Heart left ventricle (tissue), 16 donors: ENCODE measurements at regions of chr13 and their contacts with region 1.

Region 1: DNA sequence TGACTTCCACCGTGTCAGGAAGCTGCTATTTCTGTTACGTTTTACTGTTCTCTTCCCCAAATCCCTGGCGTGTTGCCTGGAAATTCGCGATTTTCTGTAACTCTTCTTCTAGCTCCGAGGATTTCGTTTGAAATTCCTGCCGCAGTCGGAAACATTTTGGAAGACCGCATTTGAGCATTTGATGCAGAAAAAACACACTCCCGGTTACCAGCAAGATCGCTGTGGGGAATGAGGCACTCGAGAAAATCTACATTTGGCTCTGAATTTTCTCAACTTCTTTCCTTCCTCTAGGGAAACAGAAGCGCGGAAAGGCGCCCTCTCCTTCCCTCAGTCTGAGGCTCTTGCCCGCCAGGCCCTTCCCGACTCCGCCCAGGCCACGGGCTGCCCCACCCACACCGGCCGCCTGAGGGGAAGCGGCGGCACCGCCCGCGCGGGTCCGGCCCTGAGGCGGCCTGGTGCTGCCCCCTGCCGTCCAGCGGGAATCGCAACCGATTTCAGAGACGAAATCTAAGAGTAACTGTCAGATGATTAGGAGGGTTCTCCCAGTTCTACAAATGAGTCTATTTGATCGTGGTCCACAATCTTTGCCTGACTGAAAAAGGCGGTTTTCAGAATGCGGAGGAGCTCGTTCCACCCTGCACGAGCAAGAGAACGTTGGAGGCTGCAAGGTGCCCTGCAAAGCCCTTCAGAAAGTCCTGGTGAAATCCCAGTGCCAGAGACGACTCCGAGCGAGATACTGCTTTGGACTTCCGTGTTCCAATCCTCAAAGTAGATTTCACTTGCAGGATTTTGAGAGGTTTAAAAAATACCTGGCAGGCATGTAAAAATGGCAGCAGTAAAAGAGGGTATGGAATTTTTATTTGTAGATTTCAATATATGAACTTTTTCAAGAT is 18.4 kb upstream of the TUBGCP3 start:
- DNase-seq: peak; percentile 93 to 97 (median 95)
- ATAC-seq: peak; percentile 99 to 100 (median 100)
- H3K4me3 ChIP-seq: peak overlapping the region; percentile 13 to 63 (median 55)
- H3K27ac ChIP-seq: peak overlapping the region in 10 of 12 donors; percentile 11 to 78 (median 62)
- H3K4me1 ChIP-seq: peaks cover 0 to 12% (median 2%) of the 10 kb centered on the region in 12 donors
- H3K27me3 ChIP-seq: peaks cover 0 to 5% (median 0%) of the 10 kb centered on the region in 9 donors
- CTCF ChIP-seq: peak; percentile 92 to 99 (median 96)
- POLR2A ChIP-seq: peak in 1 of 2 donors; percentile 54

Region 2: GRCh38 chr13:111474136-111475002 is 1132.0 kb before region 1 on chr13:
- intact Hi-C with region 1: loop called in 9 of 10 experiments (anchors 1 to 10 kb)
- DNase-seq: no peak
- ATAC-seq: peak in 3 of 4 donors; percentile 32 to 62 (median 48)
- H3K4me3 ChIP-seq: no peak overlapping the region
- H3K27ac ChIP-seq: no peak overlapping the region
- H3K4me1 ChIP-seq: no peaks in the 10 kb centered on the region
- H3K27me3 ChIP-seq: peaks cover 0 to 17% (median 3%) of the 10 kb centered on the region in 9 donors
- CTCF ChIP-seq: peak; percentile 32 to 69 (median 58)
- POLR2A ChIP-seq: no peak

Region 3: GRCh38 chr13:112333756-112334543 is 272.4 kb before region 1 on chr13:
- intact Hi-C with region 1: no loop called
- DNase-seq: no peak
- ATAC-seq: no peak
- H3K4me3 ChIP-seq: no peak overlapping the region
- H3K27ac ChIP-seq: no peak overlapping the region
- H3K4me1 ChIP-seq: peaks cover 0 to 8% (median 0%) of the 10 kb centered on the region in 12 donors
- H3K27me3 ChIP-seq: peaks cover 13 to 72% (median 29%) of the 10 kb centered on the region in 9 donors
- CTCF ChIP-seq: no peak
- POLR2A ChIP-seq: no peak

Region 4: GRCh38 chr13:112457485-112457884 is 148.9 kb before region 1 on chr13:
- intact Hi-C with region 1: no loop called
- DNase-seq: peak in 1 of 5 donors; percentile 54
- ATAC-seq: no peak
- H3K4me3 ChIP-seq: no peak overlapping the region
- H3K27ac ChIP-seq: no peak overlapping the region
- H3K4me1 ChIP-seq: no peaks in the 10 kb centered on the region
- H3K27me3 ChIP-seq: no peaks in the 10 kb centered on the region
- CTCF ChIP-seq: no peak
- POLR2A ChIP-seq: no peak

Region 5: GRCh38 chr13:112510002-112510780 is 96.2 kb before region 1 on chr13:
- intact Hi-C with region 1: loop called in 5 of 10 experiments (anchors 10 kb)
- DNase-seq: no peak
- ATAC-seq: peak in 3 of 4 donors; percentile 65 to 80 (median 77)
- H3K4me3 ChIP-seq: no peak overlapping the region
- H3K27ac ChIP-seq: no peak overlapping the region
- H3K4me1 ChIP-seq: no peaks in the 10 kb centered on the region
- H3K27me3 ChIP-seq: no peaks in the 10 kb centered on the region
- CTCF ChIP-seq: peak in 10 of 12 donors; percentile 24 to 55 (median 42)
- POLR2A ChIP-seq: no peak

Region 6: GRCh38 chr13:112587212-112587763 is 19.1 kb before region 1 on chr13:
- intact Hi-C with region 1: loop called in 1 of 10 experiments (anchors 1 kb)
- DNase-seq: peak; percentile 80 to 93 (median 91)
- ATAC-seq: peak; percentile 55 to 93 (median 88)
- H3K4me3 ChIP-seq: peak overlapping the region; percentile 63 to 99 (median 96)
- H3K27ac ChIP-seq: peak overlapping the region; percentile 87 to 99 (median 96)
- H3K4me1 ChIP-seq: peaks cover 0 to 48% (median 15%) of the 10 kb centered on the region in 12 donors
- H3K27me3 ChIP-seq: no peaks in the 10 kb centered on the region
- CTCF ChIP-seq: peak in 2 of 12 donors; percentile 19 to 22
- POLR2A ChIP-seq: no peak